GM12878 (cell line): ENCODE measurements at regions of chr6 and their contacts with region 1.

Region 1: DNA sequence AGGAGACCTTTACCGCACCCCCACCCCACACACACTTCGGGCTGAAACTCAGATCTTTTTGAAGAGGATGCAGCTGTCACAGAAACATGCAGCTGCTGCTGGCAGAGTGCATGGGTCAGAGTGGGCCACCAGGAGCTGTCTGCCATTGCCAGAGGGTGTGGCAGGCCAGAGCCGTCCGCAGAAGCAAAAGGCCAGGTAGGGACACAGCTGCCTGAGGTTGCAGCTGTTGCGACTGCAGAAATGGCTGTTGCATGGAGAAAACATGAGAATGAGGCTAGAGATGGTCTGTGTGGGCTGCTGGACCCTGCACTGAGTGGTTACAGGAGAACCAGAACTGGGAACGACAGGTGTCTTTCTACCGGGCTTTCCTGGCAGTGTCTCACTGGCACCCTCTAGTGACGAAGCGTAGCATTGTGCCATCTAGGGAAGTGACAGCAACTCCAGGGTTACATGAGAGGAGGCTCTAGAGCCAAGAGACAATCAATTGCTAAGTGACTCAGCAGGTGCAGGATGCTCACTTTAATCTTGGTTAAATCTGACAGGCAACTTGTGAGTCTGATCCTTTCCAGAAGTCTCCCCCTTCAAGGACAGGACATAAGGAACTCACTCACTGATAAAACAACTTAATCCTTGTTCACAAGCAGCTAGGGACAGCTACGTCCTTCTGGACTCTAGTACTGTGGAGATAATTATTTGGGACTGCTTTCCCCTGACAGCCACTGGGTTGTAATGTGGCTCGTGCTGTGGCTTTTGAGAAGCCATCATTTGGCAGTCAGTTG is 29.1 kb upstream of the SERPINB9 start:
- DNase-seq: peak; percentile 60
- ATAC-seq: peak; percentile 99
- H3K4me3 ChIP-seq: no peak overlapping the region
- H3K27ac ChIP-seq: no peak overlapping the region
- H3K4me1 ChIP-seq: peaks cover 6% of the 10 kb centered on the region
- H3K27me3 ChIP-seq: peaks cover 0 to 4% of the 10 kb centered on the region in 2 experiments; a peak in 1 of 4 replicates
- CTCF ChIP-seq: peak; percentile 97 to 98 (median 97); a peak in 5 of 6 replicates
- EP300 ChIP-seq: no peak
- POLR2A ChIP-seq: no peak
- RAD21 ChIP-seq: peak; percentile 95

Region 2: GRCh38 chr6:2738373-2738979 is 193.7 kb before region 1 on chr6:
- CTCF ChIA-PET with region 1: interaction called, 12 read pairs
- POLR2A ChIA-PET with region 1: no interaction called
- RAD21 ChIA-PET with region 1: no interaction called
- SMC1A ChIA-PET with region 1: interaction called, 3 read pairs
- in situ Hi-C with region 1: no loop called
- intact Hi-C with region 1: no loop called
- DNase-seq: no peak
- ATAC-seq: peak; percentile 82
- H3K4me3 ChIP-seq: no peak overlapping the region
- H3K27ac ChIP-seq: no peak overlapping the region
- H3K4me1 ChIP-seq: 0 out of 2 replicates have a peak, but pooled peaks cover 2% of the 10 kb centered on the region
- H3K27me3 ChIP-seq: peaks cover 1 to 6% of the 10 kb centered on the region in 2 experiments; a peak in 2 of 4 replicates
- CTCF ChIP-seq: peak; percentile 68 to 82 (median 71)
- EP300 ChIP-seq: no peak
- POLR2A ChIP-seq: no peak
- RAD21 ChIP-seq: peak; percentile 93

Region 3: GRCh38 chr6:2791124-2791974 is 140.8 kb before region 1 on chr6:
- CTCF ChIA-PET with region 1: interaction called, 80 read pairs
- POLR2A ChIA-PET with region 1: interaction called, 6 read pairs
- RAD21 ChIA-PET with region 1: interaction called, 74 read pairs
- SMC1A ChIA-PET with region 1: interaction called, 41 read pairs
- in situ Hi-C with region 1: loop called (anchors 5 kb)
- intact Hi-C with region 1: loop called (anchors 1 kb)
- DNase-seq: peak; percentile 13
- ATAC-seq: peak; percentile 97
- H3K4me3 ChIP-seq: no peak overlapping the region
- H3K27ac ChIP-seq: no peak overlapping the region
- H3K4me1 ChIP-seq: peaks cover 7% of the 10 kb centered on the region
- H3K27me3 ChIP-seq: no peaks in the 10 kb centered on the region
- CTCF ChIP-seq: peak; percentile 64 to 81 (median 67)
- EP300 ChIP-seq: no peak
- POLR2A ChIP-seq: no peak
- RAD21 ChIP-seq: peak; percentile 73

Region 4: GRCh38 chr6:2841264-2842138 is 90.7 kb before region 1 on chr6 and contains the start of gene SERPINB1:
- CTCF ChIA-PET with region 1: interaction called, 193 read pairs
- POLR2A ChIA-PET with region 1: interaction called, 16 read pairs
- RAD21 ChIA-PET with region 1: interaction called, 129 read pairs
- SMC1A ChIA-PET with region 1: interaction called, 151 read pairs
- in situ Hi-C with region 1: no loop called
- intact Hi-C with region 1: loop called (anchors 1 kb)
- DNase-seq: no peak
- ATAC-seq: peak; percentile 76
- H3K4me3 ChIP-seq: no peak within 1 kb of the TSS; the same call in 1 of the 2 replicates
- H3K27ac ChIP-seq: no peak within 1 kb of the TSS
- H3K4me1 ChIP-seq: peaks cover 4% of the 10 kb centered on the region; the same call in 1 of the 2 replicates
- H3K27me3 ChIP-seq: peaks cover 0 to 5% of the 10 kb centered on the region in 2 experiments; a peak in 3 of 4 replicates
- CTCF ChIP-seq: 0 out of 6 replicates have a peak, but pooled peaks of 1 of the 3 experiments have one; percentile 0
- EP300 ChIP-seq: no peak
- POLR2A ChIP-seq: peak; percentile 51; the same call in 1 of the 2 replicates
- RAD21 ChIP-seq: no peak
- polyA plus RNA-seq, gene SERPINB1: 0.82 to 1.8 TPM

Region 5: DNA sequence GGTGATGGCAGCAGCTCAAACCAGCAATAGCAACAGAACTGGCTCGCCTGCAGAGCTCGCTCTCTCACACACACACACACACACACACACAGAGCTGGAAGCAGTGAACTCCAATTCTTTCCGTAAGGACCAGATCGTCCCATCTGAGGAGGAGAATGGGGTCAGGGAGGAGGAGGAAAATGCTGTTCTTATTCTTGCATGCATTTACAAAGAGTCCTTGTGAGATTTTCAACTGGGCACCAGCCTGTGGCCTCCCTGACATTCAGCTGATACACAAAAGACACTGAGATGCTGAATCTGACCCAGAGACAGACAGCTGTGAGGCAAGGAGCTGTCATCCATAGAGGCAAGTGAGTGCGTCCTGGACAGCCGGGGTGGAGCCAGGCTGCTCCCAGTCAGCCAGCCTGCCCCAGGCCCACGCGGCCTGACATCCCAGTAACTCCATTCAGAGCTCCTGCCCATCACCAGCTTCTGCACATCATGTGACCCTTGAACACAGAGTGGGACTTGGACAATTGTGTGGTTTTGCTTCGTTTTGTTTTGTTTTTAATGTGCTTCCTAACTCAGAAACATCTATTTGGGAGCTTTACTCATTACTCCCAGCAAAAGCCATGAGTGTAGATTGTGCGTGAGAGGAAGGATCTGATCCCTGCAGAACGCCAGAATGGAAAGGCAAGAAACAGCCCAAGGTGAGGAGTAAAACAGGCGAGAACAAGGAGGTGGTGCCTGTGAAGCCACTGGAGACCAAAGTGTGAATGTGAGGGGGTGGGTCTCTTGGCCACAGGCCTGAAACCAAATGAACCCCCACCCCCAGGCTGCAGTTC is 31.1 kb before region 1 on chr6:
- CTCF ChIA-PET with region 1: interaction called, 7 read pairs
- POLR2A ChIA-PET with region 1: interaction called, 3 read pairs
- RAD21 ChIA-PET with region 1: interaction called, 6 read pairs
- SMC1A ChIA-PET with region 1: interaction called, 15 read pairs
- in situ Hi-C with region 1: no loop called
- intact Hi-C with region 1: no loop called
- DNase-seq: no peak
- ATAC-seq: peak; percentile 8
- H3K4me3 ChIP-seq: peak overlapping the region; percentile 57
- H3K27ac ChIP-seq: no peak overlapping the region
- H3K4me1 ChIP-seq: peaks cover 29% of the 10 kb centered on the region
- H3K27me3 ChIP-seq: no peaks in the 10 kb centered on the region; a peak in 1 of 4 replicates
- CTCF ChIP-seq: no peak
- EP300 ChIP-seq: no peak
- POLR2A ChIP-seq: 0 out of 2 replicates have a peak, but pooled peaks have one; percentile 1
- RAD21 ChIP-seq: no peak

Region 6: GRCh38 chr6:2917065-2917464 is 15.1 kb before region 1 on chr6:
- CTCF ChIA-PET with region 1: interaction called, 26 read pairs
- POLR2A ChIA-PET with region 1: no interaction called
- RAD21 ChIA-PET with region 1: interaction called, 7 read pairs
- SMC1A ChIA-PET with region 1: interaction called, 17 read pairs
- in situ Hi-C with region 1: no loop called
- intact Hi-C with region 1: no loop called
- DNase-seq: no peak
- ATAC-seq: peak; percentile 71
- H3K4me3 ChIP-seq: no peak overlapping the region
- H3K27ac ChIP-seq: no peak overlapping the region
- H3K4me1 ChIP-seq: no peaks in the 10 kb centered on the region
- H3K27me3 ChIP-seq: peaks cover 0 to 5% of the 10 kb centered on the region in 2 experiments; a peak in 1 of 4 replicates
- CTCF ChIP-seq: 0 out of 6 replicates have a peak, but pooled peaks of 1 of the 3 experiments have one; percentile 16
- EP300 ChIP-seq: no peak
- POLR2A ChIP-seq: no peak
- RAD21 ChIP-seq: no peak

Region 7: DNA sequence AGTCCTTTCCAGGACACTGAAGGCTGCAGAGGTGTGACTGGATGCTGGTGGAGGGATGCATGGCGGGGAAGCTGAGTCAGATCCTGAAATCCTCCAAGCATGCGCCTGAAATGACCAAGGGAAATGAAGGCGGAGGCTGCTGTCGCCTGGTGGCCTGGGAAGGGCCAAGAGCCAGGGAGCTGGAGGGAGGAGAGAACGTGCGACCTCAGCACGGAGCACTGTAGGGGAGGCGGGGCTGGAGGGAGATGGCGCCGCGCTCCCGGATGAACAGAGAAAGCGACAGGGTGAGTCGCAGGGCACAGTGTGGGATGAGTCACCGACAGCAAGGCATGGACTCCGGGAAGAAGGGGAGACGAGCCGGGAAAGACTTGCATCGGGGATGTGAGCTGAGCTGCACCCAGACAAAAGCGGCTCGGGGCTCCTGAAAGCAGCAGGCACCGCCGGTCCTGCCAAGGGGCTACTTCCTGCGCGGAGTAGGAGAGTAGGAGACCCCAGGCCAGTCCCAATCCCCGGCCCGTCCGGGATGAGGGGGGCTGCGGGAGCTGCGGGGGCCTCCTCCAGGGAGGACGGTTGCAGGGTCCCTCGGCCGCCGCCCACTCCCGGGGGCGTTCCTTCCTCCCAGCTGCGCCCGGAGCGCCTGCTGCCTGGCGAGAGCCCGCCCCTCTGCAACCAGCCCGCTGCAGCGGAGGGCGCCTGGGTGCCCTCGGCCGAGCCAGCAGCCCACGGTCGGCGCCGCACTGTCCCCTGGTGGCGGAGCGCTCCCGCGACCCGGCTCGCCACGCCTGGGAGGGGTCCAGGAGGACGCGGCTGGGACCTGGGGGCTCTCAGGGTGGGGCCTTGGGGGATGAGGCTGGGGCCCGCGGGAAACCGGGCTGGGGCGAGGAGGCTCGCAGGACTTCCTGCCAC is 56.5 kb after region 1 on chr6:
- CTCF ChIA-PET with region 1: interaction called, 62 read pairs
- POLR2A ChIA-PET with region 1: interaction called, 5 read pairs
- RAD21 ChIA-PET with region 1: interaction called, 3 read pairs
- SMC1A ChIA-PET with region 1: interaction called, 7 read pairs
- in situ Hi-C with region 1: no loop called
- intact Hi-C with region 1: no loop called
- DNase-seq: no peak
- ATAC-seq: peak; percentile 92
- H3K4me3 ChIP-seq: peak overlapping the region; percentile 71
- H3K27ac ChIP-seq: peak overlapping the region; percentile 79
- H3K4me1 ChIP-seq: peaks cover 13% of the 10 kb centered on the region
- H3K27me3 ChIP-seq: peaks cover 0 to 2% of the 10 kb centered on the region in 2 experiments; a peak in 3 of 4 replicates
- CTCF ChIP-seq: peak; percentile 56 to 75 (median 73)
- EP300 ChIP-seq: no peak; a peak in 1 of 4 replicates
- POLR2A ChIP-seq: peak; percentile 64
- RAD21 ChIP-seq: peak; percentile 73